HEK293T (cell line): ENCODE measurements at regions of chr10 and their contacts with region 1.

Region 1: GRCh38 chr10:69684020-69684980 is 54.3 kb downstream of the FAM241B start:
- DNase-seq: no peak

Region 2: DNA sequence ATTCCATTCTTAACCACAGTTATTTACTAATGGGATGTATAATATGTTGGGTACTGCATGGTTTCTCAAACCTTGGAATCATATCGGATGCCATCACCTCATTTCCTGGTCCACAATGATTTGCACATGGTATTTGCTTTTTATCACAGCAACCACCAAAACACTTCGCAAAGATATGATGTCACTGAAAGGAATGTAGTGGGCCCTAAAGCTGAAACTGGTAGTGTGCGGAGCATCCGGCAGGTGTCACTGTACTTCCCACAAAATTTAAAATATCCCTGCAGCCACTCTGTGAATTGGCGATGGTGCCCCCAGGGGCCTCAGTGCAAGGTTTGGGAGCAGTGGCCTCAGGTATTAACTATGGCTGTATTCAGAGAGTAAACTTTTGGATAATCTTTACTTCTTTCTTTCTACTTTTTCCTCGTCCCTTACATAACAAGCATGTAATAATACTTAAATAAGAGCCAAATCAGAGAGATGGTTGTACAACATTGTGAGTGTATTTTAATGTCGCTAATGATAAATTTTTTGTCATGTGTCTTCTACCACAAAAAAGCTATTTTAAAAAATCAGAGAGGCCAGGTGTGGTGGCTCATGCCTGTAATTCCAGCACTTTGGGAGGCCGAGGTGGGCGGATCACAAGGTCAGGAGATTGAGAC is 11.9 kb after region 1 on chr10:
- CTCF ChIA-PET with region 1: interaction called, 17 read pairs
- POLR2A ChIA-PET with region 1: no interaction called
- DNase-seq: peak; percentile 77

Region 3: GRCh38 chr10:69807122-69807521 is 122.8 kb after region 1 on chr10:
- CTCF ChIA-PET with region 1: no interaction called
- POLR2A ChIA-PET with region 1: no interaction called
- DNase-seq: no peak